Activated CD8-positive, alpha-beta T cell treated with anti-CD3 and anti-CD28 coated beads, Interleukin-2, amount 10 ng/mL, durations not matched to agents 7 days and 5 days (primary cell): ENCODE measurements at regions of chr12 and their contacts with region 1.

Region 1: DNA sequence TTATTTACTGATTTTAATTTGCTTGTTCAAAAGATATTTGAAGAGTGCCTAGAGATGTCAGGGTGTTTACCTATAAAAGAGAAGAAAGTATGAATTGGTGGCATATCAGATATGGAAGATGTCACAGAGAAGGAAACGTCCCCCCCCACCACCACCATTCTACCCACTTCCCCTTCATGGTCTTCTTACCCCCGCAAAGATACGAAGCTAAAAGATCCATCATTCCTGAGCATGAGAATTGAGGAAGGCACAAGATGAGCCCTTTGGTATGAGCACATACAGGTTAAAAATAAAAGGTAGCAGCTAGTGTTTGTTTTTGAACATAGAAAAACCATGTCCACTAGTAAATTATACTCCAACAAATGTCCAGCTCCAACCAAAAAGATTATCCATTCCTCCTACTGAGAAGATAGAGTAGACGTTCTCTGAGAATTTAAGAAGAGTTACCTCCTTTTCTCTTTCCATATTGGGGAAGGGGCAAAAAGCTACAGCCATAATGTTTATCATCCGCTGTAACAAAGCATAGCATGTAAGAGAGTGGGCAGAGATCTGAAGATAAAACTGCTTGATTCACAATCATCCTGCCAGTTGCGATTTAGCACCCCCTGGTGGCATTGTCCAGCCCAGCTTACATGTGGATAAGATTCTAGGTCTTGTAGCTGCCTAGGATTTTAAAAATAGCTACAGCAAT is 29.1 kb downstream of the NFYB start:
- DNase-seq: peak; percentile 93
- ATAC-seq: peak; percentile 99
- H3K4me3 Mint-ChIP-seq: no peak overlapping the region
- H3K27ac Mint-ChIP-seq: peak overlapping the region; percentile 22
- H3K4me1 Mint-ChIP-seq: peaks cover 12% of the 10 kb centered on the region
- H3K27me3 Mint-ChIP-seq: no peaks in the 10 kb centered on the region

Region 2: DNA sequence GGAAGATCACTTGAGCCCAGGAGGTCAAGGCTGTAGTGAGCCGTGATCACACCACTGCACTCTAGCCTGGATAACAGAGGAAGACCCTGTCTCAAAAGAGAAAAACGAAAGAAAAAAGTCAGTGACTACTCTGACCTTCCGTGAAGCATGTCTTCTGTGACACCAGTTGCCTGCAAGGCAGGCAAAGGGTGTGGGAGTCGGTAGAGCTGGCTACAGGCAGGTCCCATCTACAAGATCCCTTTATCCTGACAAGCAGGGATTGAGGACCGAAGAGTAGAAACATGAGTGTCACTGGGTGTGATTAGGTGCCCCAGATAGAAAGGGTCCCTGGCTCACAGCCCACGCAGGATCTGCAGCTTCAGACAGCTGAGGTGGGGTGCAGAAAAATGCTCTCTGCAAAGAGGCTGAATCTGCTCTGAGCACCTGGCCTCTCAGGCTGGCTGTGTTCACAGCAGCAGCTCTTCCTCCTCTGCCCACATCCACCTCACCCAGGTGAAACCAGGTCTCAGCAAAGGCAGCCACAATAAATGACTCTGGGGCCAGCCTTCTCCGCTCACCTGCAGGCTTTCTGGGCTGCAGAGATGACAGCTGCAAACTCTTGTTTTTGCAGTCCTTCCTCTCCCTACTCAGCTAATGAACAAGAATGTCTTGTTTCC is 207.3 kb before region 1 on chr12:
- CTCF ChIA-PET with region 1: interaction called, 11 read pairs
- POLR2A ChIA-PET with region 1: no interaction called
- DNase-seq: peak; percentile 47
- ATAC-seq: peak; percentile 76
- H3K4me3 Mint-ChIP-seq: peak overlapping the region; percentile 17
- H3K27ac Mint-ChIP-seq: peak overlapping the region; percentile 14
- H3K4me1 Mint-ChIP-seq: peaks cover 25% of the 10 kb centered on the region
- H3K27me3 Mint-ChIP-seq: no peaks in the 10 kb centered on the region

Region 3: DNA sequence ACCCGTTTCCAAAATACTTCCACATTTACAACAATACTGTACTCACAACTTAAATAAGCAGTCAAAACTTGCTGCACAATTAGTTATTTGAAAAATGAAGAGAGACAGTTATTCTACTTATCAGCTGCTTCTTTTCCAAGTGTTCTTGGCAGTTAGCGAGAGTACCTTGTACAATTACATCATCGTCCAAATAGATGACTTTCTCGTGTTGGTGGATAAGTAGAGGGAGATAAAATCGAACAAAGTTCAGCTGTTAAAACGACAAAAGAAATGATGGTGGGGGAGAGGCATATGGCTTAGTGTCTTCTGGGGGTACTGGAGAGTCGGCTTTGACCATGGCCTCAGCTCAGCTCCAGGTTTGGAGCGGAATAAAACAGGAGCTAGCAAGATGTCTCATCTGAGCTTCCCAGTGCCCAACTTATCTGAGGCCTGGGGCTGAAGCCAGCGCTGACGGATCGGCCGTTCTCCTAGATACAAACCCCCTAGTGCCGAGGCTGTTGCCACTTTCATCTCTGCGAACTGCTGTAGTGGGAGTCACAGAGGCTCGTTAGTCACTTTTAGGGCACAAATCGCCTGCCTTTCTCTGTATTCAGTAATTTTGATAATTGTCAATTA is 111.5 kb before region 1 on chr12:
- CTCF ChIA-PET with region 1: interaction called, 14 read pairs
- POLR2A ChIA-PET with region 1: no interaction called
- DNase-seq: no peak
- ATAC-seq: no peak
- H3K4me3 Mint-ChIP-seq: no peak overlapping the region
- H3K27ac Mint-ChIP-seq: no peak overlapping the region
- H3K4me1 Mint-ChIP-seq: no peaks in the 10 kb centered on the region
- H3K27me3 Mint-ChIP-seq: peaks cover 40% of the 10 kb centered on the region

Region 4: GRCh38 chr12:104011261-104011660 is 97.6 kb before region 1 on chr12:
- CTCF ChIA-PET with region 1: no interaction called
- POLR2A ChIA-PET with region 1: no interaction called
- DNase-seq: no peak
- ATAC-seq: no peak
- H3K4me3 Mint-ChIP-seq: no peak overlapping the region
- H3K27ac Mint-ChIP-seq: no peak overlapping the region
- H3K4me1 Mint-ChIP-seq: no peaks in the 10 kb centered on the region
- H3K27me3 Mint-ChIP-seq: peaks cover 26% of the 10 kb centered on the region

Region 5: DNA sequence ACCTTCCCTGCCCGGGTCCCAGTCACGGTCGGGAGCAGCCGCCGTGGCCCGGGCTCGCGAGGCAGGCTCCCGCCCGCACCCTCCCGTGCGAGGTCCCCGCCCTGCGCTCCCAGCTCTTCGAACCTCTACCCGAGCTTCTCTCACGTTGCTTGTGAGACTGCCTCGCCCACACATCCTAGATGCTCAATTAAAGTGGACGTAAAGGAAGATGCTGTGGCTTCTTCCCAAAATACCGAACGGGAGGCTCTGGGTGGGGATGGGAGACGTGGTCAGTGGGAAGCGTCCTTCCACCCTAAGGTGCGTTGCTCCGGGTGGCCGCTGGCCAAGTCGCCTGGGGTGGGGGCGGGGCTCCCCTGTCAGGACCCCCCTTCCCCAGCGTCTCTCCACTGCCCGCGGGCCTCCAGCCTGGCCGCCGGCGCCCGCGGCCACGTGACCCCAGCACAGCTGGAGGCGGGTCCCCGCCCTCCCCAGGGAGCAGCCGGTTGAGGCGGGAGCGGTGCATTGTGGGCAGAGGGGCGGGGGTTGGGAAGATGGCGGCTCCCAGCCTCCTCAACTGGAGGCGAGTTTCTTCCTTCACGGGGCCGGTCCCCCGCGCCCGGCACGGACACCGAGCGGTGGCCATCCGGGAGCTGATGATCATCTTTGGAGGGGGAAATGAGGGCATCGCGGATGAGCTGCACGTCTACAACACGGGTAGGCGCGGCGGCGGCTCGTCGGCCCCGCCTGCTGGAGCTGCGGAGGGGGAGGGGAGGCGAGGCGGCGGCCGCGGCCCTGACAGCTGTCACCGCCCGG is 44.7 kb before region 1 on chr12 and contains the start of gene HCFC2:
- CTCF ChIA-PET with region 1: interaction called, 80 read pairs
- POLR2A ChIA-PET with region 1: no interaction called
- DNase-seq: peak; percentile 91
- ATAC-seq: peak; percentile 95
- H3K4me3 Mint-ChIP-seq: peak within 1 kb of the TSS; percentile 95
- H3K27ac Mint-ChIP-seq: peak within 1 kb of the TSS; percentile 89
- H3K4me1 Mint-ChIP-seq: peaks cover 21% of the 10 kb centered on the region
- H3K27me3 Mint-ChIP-seq: peaks cover 15% of the 10 kb centered on the region
- total RNA-seq, gene HCFC2: 12.0 to 15.3 TPM

Region 6: DNA sequence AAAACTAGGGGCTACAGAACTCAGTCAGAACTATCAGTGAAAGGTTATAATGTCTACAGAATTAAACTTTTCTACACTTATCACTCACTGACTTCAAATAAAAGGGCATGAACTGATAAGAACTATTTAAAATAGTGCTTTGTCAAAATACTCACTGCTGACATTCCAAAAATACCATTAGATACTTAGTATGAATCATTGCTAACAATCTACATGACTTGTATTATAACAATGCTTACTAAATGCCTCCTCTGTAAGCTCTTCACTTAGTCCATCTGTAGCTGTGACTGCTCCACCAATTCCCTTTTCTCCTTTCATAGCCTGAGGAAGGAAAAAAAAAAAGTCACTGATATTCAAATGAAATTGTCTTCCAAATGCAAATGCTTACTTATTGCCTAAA is 12.1 kb after region 1 on chr12:
- CTCF ChIA-PET with region 1: interaction called, 32 read pairs
- POLR2A ChIA-PET with region 1: no interaction called
- DNase-seq: no peak
- ATAC-seq: no peak
- H3K4me3 Mint-ChIP-seq: no peak overlapping the region
- H3K27ac Mint-ChIP-seq: no peak overlapping the region
- H3K4me1 Mint-ChIP-seq: no peaks in the 10 kb centered on the region
- H3K27me3 Mint-ChIP-seq: no peaks in the 10 kb centered on the region

Region 7: DNA sequence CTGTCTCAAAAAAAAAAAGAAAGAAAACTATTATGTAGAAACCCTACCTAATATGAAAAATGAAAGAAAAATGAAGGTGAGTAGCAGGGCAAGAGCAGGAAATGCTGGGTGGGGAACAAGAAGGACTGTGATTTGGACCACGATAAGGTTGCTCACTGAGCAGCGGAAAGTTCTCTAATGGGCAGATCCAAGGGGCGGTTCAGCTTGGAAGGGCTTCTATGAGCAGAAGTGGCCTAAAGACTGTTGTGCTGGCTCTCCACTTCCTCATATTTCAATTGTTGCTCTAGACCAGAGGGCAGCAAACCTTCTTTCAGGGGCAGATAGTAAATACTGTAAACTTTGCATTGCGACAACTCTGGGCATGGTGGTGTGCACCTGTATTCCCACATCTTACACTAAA is 45.4 kb after region 1 on chr12:
- CTCF ChIA-PET with region 1: no interaction called
- POLR2A ChIA-PET with region 1: no interaction called
- DNase-seq: no peak
- ATAC-seq: no peak
- H3K4me3 Mint-ChIP-seq: no peak overlapping the region
- H3K27ac Mint-ChIP-seq: no peak overlapping the region
- H3K4me1 Mint-ChIP-seq: peaks cover 9% of the 10 kb centered on the region
- H3K27me3 Mint-ChIP-seq: peaks cover 8% of the 10 kb centered on the region

Region 8: GRCh38 chr12:104201238-104202001 is 92.5 kb after region 1 on chr12:
- CTCF ChIA-PET with region 1: no interaction called
- POLR2A ChIA-PET with region 1: no interaction called
- DNase-seq: peak; percentile 57
- ATAC-seq: peak; percentile 65
- H3K4me3 Mint-ChIP-seq: no peak overlapping the region
- H3K27ac Mint-ChIP-seq: no peak overlapping the region
- H3K4me1 Mint-ChIP-seq: peaks cover 2% of the 10 kb centered on the region
- H3K27me3 Mint-ChIP-seq: peaks cover 23% of the 10 kb centered on the region